Head of caudate nucleus (tissue), 42 donors: ENCODE measurements at regions of chr1 and their contacts with region 1.

Region 1: GRCh38 chr1:197224160-197224559 is 43.9 kb upstream of the CRB1 start:
- DNase-seq: no peak

Region 2: DNA sequence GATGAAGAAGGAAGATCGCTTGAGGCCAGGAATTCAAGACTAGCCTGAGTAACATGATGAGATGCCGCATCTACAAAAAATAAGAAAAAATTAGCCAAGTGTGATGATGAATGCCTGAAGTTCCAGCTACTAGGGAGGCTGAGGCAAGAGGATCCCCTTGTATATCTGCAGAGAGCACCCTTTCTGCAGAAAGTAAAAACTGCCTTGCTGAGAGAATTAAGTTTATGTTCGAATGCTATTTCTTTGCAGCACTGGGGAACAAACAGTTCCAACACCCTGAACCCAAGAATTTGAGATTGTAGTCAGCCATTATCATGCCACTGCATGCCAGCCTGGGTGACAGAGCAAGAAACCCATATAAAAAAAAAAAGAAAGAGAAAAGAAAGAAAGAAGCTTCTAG is 595.3 kb before region 1 on chr1:
- intact Hi-C with region 1: no loop called
- DNase-seq: no peak

Region 3: GRCh38 chr1:197314682-197315081 is 90.5 kb after region 1 on chr1:
- intact Hi-C with region 1: loop called (anchors 5 kb)
- DNase-seq: peak in 20 of 42 donors; percentile 11 to 75 (median 45)

Region 4: DNA sequence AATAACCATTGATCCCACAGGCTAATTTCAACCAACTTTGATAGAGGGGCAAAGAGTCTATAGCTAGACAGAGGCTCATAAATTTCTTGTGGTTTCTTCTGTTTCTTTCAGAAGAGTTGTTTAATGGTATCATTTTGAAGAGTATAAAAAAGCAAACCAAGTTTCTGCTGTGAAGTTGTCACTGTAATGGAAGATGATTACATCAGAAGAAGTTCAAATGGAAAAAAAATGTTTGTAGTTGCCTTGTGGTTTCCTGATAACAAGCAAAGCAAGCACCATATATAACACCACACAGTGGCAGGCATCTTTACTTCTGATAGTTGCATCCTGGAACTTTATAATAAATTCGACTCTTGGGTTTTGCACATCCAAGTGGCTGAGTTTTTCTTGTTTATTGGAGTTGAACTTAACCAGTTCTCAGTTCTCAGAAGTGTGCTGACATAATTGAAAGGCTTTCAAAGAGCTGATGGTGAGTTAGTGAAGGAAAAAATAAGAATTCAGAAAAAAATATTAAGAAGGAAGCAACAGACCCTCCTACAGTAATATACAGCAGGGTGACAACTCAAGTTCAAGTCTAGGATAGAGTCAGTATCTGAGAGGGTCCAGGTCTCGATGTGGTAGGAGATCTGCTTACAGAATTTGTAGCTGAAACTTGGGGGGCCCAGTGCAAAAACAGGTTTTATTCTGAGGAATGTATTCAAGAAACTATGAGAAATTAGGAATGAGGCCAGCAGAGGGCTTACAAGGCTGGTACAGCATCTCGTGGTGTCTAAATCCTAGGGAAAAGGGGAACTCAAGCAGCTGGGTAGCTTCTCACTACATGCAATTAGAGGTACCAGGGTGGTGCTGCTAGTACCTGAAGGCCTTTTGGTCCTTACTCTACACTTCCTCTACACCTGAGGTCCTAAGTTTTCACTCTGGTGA is 167.4 kb after region 1 on chr1:
- intact Hi-C with region 1: no loop called
- DNase-seq: peak in 2 of 42 donors; percentile 3